GM12878 (cell line): ENCODE measurements at regions of chr2 and their contacts with region 1.

Region 1: GRCh38 chr2:57850415-57851130 is 196.0 kb upstream of the VRK2 start:
- DNase-seq: no peak
- ATAC-seq: no peak
- H3K4me3 ChIP-seq: no peak overlapping the region
- H3K27ac ChIP-seq: no peak overlapping the region
- H3K4me1 ChIP-seq: no peaks in the 10 kb centered on the region
- H3K27me3 ChIP-seq: no peaks in the 10 kb centered on the region
- CTCF ChIP-seq: no peak
- EP300 ChIP-seq: no peak
- POLR2A ChIP-seq: no peak
- RAD21 ChIP-seq: no peak

Region 2: GRCh38 chr2:57828221-57828620 is 22.4 kb before region 1 on chr2:
- CTCF ChIA-PET with region 1: no interaction called
- POLR2A ChIA-PET with region 1: no interaction called
- RAD21 ChIA-PET with region 1: no interaction called
- SMC1A ChIA-PET with region 1: no interaction called
- in situ Hi-C with region 1: no loop called
- intact Hi-C with region 1: no loop called
- DNase-seq: no peak
- ATAC-seq: no peak
- H3K4me3 ChIP-seq: no peak overlapping the region
- H3K27ac ChIP-seq: no peak overlapping the region
- H3K4me1 ChIP-seq: no peaks in the 10 kb centered on the region
- H3K27me3 ChIP-seq: no peaks in the 10 kb centered on the region
- CTCF ChIP-seq: no peak
- EP300 ChIP-seq: no peak
- POLR2A ChIP-seq: no peak
- RAD21 ChIP-seq: no peak

Region 3: DNA sequence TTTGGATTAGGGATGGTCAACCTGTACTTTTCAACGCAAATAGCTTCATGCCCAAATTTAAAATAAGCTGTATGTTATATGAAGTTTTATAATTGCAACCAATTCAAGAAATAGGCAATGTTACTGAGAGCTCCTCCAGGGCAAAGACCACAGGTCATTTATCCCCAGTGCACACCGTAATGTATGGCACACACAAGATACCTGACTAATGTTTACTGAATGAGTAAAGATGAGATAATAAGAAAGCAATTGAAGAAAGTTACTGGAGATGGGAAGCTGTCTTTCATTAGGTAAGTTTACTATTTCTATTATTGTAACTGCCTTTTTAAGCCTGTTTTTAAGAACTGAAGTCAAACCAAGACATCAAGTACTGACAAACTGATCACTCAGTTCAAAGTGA is 11.6 kb after region 1 on chr2:
- CTCF ChIA-PET with region 1: interaction called, 4 read pairs
- POLR2A ChIA-PET with region 1: interaction called, 3 read pairs
- RAD21 ChIA-PET with region 1: interaction called, 3 read pairs
- SMC1A ChIA-PET with region 1: interaction called, 25 read pairs
- in situ Hi-C with region 1: no loop called
- intact Hi-C with region 1: no loop called
- DNase-seq: no peak
- ATAC-seq: no peak
- H3K4me3 ChIP-seq: no peak overlapping the region
- H3K27ac ChIP-seq: no peak overlapping the region
- H3K4me1 ChIP-seq: no peaks in the 10 kb centered on the region
- H3K27me3 ChIP-seq: no peaks in the 10 kb centered on the region
- CTCF ChIP-seq: no peak
- EP300 ChIP-seq: no peak
- POLR2A ChIP-seq: no peak
- RAD21 ChIP-seq: no peak

Region 4: DNA sequence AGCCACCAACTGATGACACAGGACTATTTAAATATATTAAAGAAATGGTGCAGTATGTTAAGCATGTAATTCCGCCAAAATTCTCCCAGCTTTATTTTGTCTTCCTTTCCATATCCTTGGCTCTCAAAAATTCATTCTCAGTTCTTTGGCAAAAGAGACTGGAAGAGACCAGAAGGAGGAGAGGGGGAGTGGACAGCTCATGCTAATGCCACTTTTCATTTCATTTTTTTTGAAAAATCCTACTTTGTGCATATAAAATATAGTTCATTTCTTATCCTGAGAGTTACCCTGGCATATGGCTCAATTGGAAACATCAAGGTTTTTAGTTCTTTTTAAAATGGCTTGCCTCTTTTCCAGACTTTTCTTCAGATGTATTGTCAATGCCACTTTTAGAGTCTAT is 67.6 kb after region 1 on chr2:
- CTCF ChIA-PET with region 1: no interaction called
- POLR2A ChIA-PET with region 1: no interaction called
- RAD21 ChIA-PET with region 1: no interaction called
- SMC1A ChIA-PET with region 1: no interaction called
- in situ Hi-C with region 1: no loop called
- intact Hi-C with region 1: no loop called
- DNase-seq: no peak
- ATAC-seq: no peak
- H3K4me3 ChIP-seq: no peak overlapping the region
- H3K27ac ChIP-seq: no peak overlapping the region
- H3K4me1 ChIP-seq: no peaks in the 10 kb centered on the region; the same call in 1 of the 2 replicates
- H3K27me3 ChIP-seq: no peaks in the 10 kb centered on the region
- CTCF ChIP-seq: no peak
- EP300 ChIP-seq: no peak
- POLR2A ChIP-seq: no peak
- RAD21 ChIP-seq: no peak

Region 5: GRCh38 chr2:57990118-57990725 is 139.6 kb after region 1 on chr2:
- CTCF ChIA-PET with region 1: no interaction called
- POLR2A ChIA-PET with region 1: no interaction called
- RAD21 ChIA-PET with region 1: no interaction called
- SMC1A ChIA-PET with region 1: no interaction called
- in situ Hi-C with region 1: no loop called
- intact Hi-C with region 1: no loop called
- DNase-seq: peak; percentile 30
- ATAC-seq: peak; percentile 96
- H3K4me3 ChIP-seq: no peak overlapping the region
- H3K27ac ChIP-seq: no peak overlapping the region
- H3K4me1 ChIP-seq: no peaks in the 10 kb centered on the region
- H3K27me3 ChIP-seq: no peaks in the 10 kb centered on the region
- CTCF ChIP-seq: no peak
- EP300 ChIP-seq: 0 out of 4 replicates have a peak, but pooled peaks of 1 of the 2 experiments have one; percentile 35
- POLR2A ChIP-seq: no peak
- RAD21 ChIP-seq: 0 out of 2 replicates have a peak, but pooled peaks have one; percentile 0